Sigmoid colon (tissue), 7 donors: ENCODE measurements at regions of chr11 and their contacts with region 1.

Region 1: GRCh38 chr11:101860696-101861427 is 53.9 kb upstream of the CEP126 start:
- DNase-seq: no peak
- H3K4me3 ChIP-seq: no peak overlapping the region
- H3K27ac ChIP-seq: no peak overlapping the region
- H3K4me1 ChIP-seq: peaks cover 0 to 19% (median 8%) of the 10 kb centered on the region in 4 donors
- H3K27me3 ChIP-seq: no peaks in the 10 kb centered on the region
- CTCF ChIP-seq: peak; percentile 30 to 83 (median 62)
- EP300 ChIP-seq: no peak
- POLR2A ChIP-seq: no peak

Region 2: DNA sequence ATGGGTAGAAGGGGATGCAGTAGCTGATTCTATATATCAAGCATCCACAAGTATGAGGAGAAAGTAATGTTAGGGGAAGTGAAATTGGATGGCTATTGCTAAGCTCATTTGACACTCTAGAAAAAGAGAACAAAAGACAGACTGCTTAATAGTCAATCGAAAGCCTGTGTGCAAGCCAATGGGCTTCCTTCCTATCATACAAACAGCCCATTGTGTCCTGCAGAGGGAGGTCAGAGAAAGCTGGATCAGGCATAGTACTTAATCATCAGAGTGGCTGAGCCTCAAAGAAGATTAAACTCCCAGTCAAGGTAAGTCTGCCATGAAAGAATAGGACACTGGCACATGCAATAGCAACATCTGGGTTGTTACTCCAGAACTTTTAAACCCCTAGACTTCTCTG is 680.4 kb before region 1 on chr11:
- intact Hi-C with region 1: no loop called
- DNase-seq: no peak
- H3K4me3 ChIP-seq: no peak overlapping the region
- H3K27ac ChIP-seq: no peak overlapping the region
- H3K4me1 ChIP-seq: peaks cover 0 to 3% (median 0%) of the 10 kb centered on the region in 4 donors
- H3K27me3 ChIP-seq: no peaks in the 10 kb centered on the region
- CTCF ChIP-seq: no peak
- EP300 ChIP-seq: no peak
- POLR2A ChIP-seq: no peak

Region 3: GRCh38 chr11:101777476-101777875 is 83.4 kb before region 1 on chr11:
- intact Hi-C with region 1: no loop called
- DNase-seq: no peak
- H3K4me3 ChIP-seq: no peak overlapping the region
- H3K27ac ChIP-seq: no peak overlapping the region
- H3K4me1 ChIP-seq: no peaks in the 10 kb centered on the region
- H3K27me3 ChIP-seq: no peaks in the 10 kb centered on the region
- CTCF ChIP-seq: no peak
- EP300 ChIP-seq: no peak
- POLR2A ChIP-seq: no peak

Region 4: GRCh38 chr11:101807531-101807930 is 53.3 kb before region 1 on chr11:
- intact Hi-C with region 1: no loop called
- DNase-seq: no peak
- H3K4me3 ChIP-seq: no peak overlapping the region
- H3K27ac ChIP-seq: no peak overlapping the region
- H3K4me1 ChIP-seq: no peaks in the 10 kb centered on the region
- H3K27me3 ChIP-seq: no peaks in the 10 kb centered on the region
- CTCF ChIP-seq: no peak
- EP300 ChIP-seq: no peak
- POLR2A ChIP-seq: no peak

Region 5: GRCh38 chr11:101907815-101908214 is 47.0 kb after region 1 on chr11:
- intact Hi-C with region 1: no loop called
- DNase-seq: no peak
- H3K4me3 ChIP-seq: no peak overlapping the region
- H3K27ac ChIP-seq: no peak overlapping the region
- H3K4me1 ChIP-seq: no peaks in the 10 kb centered on the region
- H3K27me3 ChIP-seq: no peaks in the 10 kb centered on the region
- CTCF ChIP-seq: no peak
- EP300 ChIP-seq: no peak
- POLR2A ChIP-seq: no peak

Region 6: GRCh38 chr11:102007567-102008437 is 146.9 kb after region 1 on chr11:
- intact Hi-C with region 1: loop called (anchors 1 kb)
- DNase-seq: no peak
- H3K4me3 ChIP-seq: no peak overlapping the region
- H3K27ac ChIP-seq: peak overlapping the region in 1 of 4 donors; percentile 45
- H3K4me1 ChIP-seq: peaks cover 0 to 12% (median 2%) of the 10 kb centered on the region in 4 donors
- H3K27me3 ChIP-seq: no peaks in the 10 kb centered on the region
- CTCF ChIP-seq: peak in 2 of 4 experiments; percentile 38 to 59
- EP300 ChIP-seq: no peak
- POLR2A ChIP-seq: no peak